Transverse colon (tissue), 4 donors: ENCODE measurements at regions of chrX and their contacts with region 1.

Region 1: DNA sequence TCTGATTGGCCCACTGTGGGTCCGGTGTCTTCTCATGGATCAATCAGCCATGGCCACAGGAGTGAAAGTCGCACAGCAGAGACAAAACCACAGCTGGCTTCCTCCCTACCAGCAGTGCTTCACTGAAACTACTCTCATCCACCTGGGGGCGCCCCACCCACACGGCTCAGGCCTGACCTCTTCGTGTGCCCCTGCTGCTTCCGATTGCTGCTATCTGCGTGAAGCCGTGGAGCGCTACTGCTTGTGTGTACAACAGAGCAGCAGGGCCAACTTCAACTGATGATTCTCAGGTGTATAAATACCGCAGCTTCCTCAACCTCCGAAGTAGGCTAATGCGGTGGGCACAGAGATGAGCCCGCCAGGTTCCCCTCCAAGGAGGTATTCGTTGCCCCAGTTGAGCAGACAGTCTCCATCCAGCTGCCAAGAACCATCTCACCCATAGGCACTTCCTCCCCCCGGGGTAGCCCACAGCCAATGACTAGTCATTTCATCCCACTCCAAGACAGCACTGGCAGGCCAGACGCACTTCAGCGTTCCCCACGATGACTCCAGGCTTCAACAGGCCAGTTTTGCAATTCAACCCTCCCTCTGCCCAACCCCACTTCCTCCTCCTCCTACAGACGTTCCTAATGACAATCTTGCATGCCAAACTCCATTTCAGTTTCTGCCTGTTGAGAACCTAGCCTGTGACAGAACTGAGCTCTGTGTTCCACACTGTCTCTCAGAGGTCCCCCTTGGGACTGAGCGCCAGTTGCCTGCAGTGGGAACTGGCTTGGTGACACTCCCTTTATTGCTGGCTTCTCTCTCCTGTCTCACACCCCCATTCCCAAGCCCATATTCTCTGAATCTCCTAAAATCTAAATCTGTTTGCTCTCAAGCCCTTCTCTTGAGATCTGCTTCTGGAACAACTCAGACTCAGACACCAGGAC is 41.3 kb upstream of the ATP6AP2 start:
- DNase-seq: peak; percentile 49
- H3K4me3 ChIP-seq: no peak overlapping the region
- H3K27ac ChIP-seq: no peak overlapping the region
- H3K4me1 ChIP-seq: peaks cover 0 to 18% (median 6%) of the 10 kb centered on the region in 4 donors
- H3K27me3 ChIP-seq: no peaks in the 10 kb centered on the region
- CTCF ChIP-seq: no peak
- EP300 ChIP-seq: no peak
- POLR2A ChIP-seq: no peak

Region 2: DNA sequence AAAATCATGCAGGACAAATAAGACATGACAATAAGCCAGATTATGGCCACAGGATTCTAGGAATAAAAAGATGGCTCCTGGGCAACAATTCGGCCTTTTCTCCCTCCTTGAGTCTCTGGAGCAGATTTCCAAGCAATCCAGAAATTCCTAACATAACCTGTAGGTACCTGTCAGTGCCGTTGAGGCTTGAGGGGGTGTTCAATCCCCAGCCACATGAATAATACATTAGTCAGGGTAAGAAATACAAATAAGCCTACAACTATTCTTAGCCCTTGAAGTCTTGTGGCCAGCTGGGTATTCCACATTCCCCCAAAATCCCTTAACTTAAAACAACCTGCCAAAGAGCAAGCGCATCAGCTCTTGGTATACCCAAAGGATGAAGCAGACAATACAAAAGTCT is 98.2 kb after region 1 on chrX:
- in situ Hi-C with region 1: no loop called
- intact Hi-C with region 1: loop called (anchors 10 kb)
- DNase-seq: no peak
- H3K4me3 ChIP-seq: no peak overlapping the region
- H3K27ac ChIP-seq: no peak overlapping the region
- H3K4me1 ChIP-seq: no peaks in the 10 kb centered on the region
- H3K27me3 ChIP-seq: no peaks in the 10 kb centered on the region
- CTCF ChIP-seq: no peak
- EP300 ChIP-seq: no peak
- POLR2A ChIP-seq: no peak